Dendritic cell treated with granulocyte-macrophage colony-stimulating factor and Interleukin-4, amounts not matched to agents 40 ng/mL and 50 ng/mL, for 4 days (primary cell): ENCODE measurements at regions of chr3 and their contacts with region 1.

Region 1: GRCh38 chr3:179653096-179653797 is 407 bp downstream of the USP13 start:
- H3K4me3 Mint-ChIP-seq: peak overlapping the region; percentile 89
- H3K27ac Mint-ChIP-seq: peak overlapping the region; percentile 75
- H3K4me1 Mint-ChIP-seq: peaks cover 24% of the 10 kb centered on the region
- H3K27me3 Mint-ChIP-seq: peaks cover 36% of the 10 kb centered on the region

Region 2: GRCh38 chr3:179695672-179696313 is 42.5 kb after region 1 on chr3:
- intact Hi-C with region 1: loop called (anchors 5 kb)
- H3K4me3 Mint-ChIP-seq: no peak overlapping the region
- H3K27ac Mint-ChIP-seq: peak overlapping the region; percentile 19
- H3K4me1 Mint-ChIP-seq: peaks cover 32% of the 10 kb centered on the region
- H3K27me3 Mint-ChIP-seq: no peaks in the 10 kb centered on the region